ENCODE measurements at regions of chr1 and their contacts with region 1.

Region 1: DNA sequence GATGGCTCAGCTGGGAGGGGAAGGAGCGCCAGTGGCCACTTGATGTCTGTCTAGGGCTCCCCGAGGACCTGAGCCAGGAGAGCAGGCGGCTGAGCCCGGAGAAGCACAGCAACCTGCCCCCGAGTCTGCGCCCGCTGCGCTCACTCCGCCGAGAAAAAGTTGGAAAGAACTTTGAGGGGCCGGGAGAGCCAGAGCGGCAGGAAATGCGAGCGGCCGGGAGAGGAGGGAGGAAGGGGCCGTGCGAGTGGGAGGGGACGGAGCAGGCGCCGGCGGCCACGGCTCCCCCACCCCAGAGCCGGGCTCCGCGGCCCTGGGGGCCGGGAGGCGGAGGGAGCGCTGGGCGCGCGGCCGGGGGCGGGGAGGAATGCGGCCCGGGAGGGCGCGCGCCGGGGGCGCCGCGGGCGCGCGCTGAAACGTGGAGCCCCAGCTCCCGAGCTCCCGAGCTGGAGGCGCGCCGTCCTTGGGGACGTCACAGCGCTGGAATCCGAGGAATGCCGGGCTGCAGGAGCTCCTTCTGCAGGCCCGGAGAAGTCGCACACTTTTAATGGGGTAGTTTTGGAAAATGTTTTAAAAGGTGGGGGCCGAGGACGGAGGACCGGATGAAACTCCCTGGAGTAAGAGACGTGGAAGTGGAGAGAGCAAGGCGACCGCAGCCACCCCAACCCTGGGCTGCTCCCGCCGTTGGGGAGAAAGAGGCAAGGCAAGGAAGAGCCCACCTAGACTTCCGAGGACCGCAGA is at the start of gene PTPN14:
- DNase-seq: peak; percentile 96
- H3K4me3 Mint-ChIP-seq: peak within 1 kb of the TSS; percentile 78
- H3K27ac Mint-ChIP-seq: peak within 1 kb of the TSS; percentile 86
- H3K4me1 Mint-ChIP-seq: peaks cover 26% of the 10 kb centered on the region
- H3K27me3 Mint-ChIP-seq: no peaks in the 10 kb centered on the region
- CTCF ChIP-seq: peak; percentile 24
- total RNA-seq, gene PTPN14: 72.4 and 77.4 TPM in 2 replicates

Region 2: DNA sequence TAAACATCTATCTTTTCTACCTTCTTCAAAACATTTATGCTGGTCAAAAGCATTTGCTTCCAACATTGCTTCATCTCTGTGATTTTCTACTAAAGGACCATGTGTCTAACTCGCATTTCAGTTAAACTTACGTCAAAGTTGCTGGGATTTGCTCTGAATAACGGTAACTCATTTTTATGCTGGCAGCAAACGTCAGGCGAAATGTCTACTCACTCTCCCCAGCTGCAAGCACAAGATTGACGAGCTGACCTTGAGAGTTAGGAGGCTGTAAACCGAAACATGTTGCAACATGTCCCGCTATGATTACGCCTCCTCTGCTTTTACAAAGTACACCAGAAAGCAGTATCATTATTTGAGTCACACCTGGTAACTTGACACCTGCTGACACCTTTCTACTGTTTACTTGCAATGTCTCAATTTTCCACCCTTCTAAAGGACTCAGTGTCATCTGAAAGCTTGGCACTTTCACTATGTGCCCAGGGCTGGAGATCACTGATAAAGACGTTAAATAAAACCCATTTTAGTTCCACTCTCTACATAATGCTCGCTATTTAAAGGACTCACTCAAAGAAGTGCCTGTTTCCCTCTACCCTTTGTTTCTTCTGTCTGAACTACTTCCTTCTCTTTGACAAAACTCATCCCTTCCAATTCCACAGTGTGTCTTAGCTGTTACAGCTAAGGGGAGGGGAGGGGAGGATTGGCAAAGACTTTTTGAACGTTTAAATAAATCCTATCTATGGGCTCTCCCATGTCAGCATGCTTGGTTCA is 112.1 kb before region 1 on chr1:
- CTCF ChIA-PET with region 1: interaction called, 3 read pairs
- intact Hi-C with region 1: loop called (anchors 2 kb)
- DNase-seq: peak; percentile 64
- H3K4me3 Mint-ChIP-seq: peak overlapping the region; percentile 53
- H3K27ac Mint-ChIP-seq: peak overlapping the region; percentile 67
- H3K4me1 Mint-ChIP-seq: peaks cover 63% of the 10 kb centered on the region
- H3K27me3 Mint-ChIP-seq: no peaks in the 10 kb centered on the region
- CTCF ChIP-seq: no peak

Region 3: GRCh38 chr1:214446772-214447556 is 104.6 kb before region 1 on chr1:
- CTCF ChIA-PET with region 1: no interaction called
- intact Hi-C with region 1: loop called (anchors 2 kb)
- DNase-seq: peak; percentile 88
- H3K4me3 Mint-ChIP-seq: peak overlapping the region; percentile 47
- H3K27ac Mint-ChIP-seq: peak overlapping the region; percentile 85
- H3K4me1 Mint-ChIP-seq: peaks cover 76% of the 10 kb centered on the region
- H3K27me3 Mint-ChIP-seq: no peaks in the 10 kb centered on the region
- CTCF ChIP-seq: no peak

Region 4: GRCh38 chr1:214492401-214493075 is 59.1 kb before region 1 on chr1:
- CTCF ChIA-PET with region 1: no interaction called
- intact Hi-C with region 1: no loop called
- DNase-seq: no peak
- H3K4me3 Mint-ChIP-seq: no peak overlapping the region
- H3K27ac Mint-ChIP-seq: no peak overlapping the region
- H3K4me1 Mint-ChIP-seq: peaks cover 75% of the 10 kb centered on the region
- H3K27me3 Mint-ChIP-seq: no peaks in the 10 kb centered on the region
- CTCF ChIP-seq: no peak

Region 5: DNA sequence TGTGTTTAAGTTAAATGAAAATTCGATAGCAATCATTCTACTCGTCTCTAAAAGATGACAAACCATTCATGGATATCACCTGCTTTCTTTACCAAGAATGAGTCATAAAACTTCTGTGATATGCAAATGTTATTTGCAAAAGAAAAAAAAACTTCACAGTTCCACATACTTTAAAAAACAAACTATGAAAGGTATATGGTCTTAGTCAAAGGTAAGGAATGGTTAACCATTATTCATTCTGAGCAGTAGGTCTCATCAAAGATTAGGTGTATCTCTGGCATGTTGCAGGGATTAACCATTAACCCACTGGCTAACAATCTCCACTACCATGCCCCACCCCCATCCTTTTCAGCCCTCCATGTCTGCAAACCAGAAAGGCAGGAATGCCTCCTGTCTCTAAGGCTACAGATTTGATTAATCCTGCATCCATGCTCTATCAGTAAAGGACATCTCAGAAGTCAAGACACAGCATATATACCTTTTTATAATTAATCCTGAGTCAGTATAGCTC is 44.6 kb before region 1 on chr1:
- CTCF ChIA-PET with region 1: interaction called, 3 read pairs
- intact Hi-C with region 1: loop called (anchors 2 kb)
- DNase-seq: peak; percentile 93
- H3K4me3 Mint-ChIP-seq: peak overlapping the region; percentile 39
- H3K27ac Mint-ChIP-seq: peak overlapping the region; percentile 83
- H3K4me1 Mint-ChIP-seq: peaks cover 58% of the 10 kb centered on the region
- H3K27me3 Mint-ChIP-seq: no peaks in the 10 kb centered on the region
- CTCF ChIP-seq: no peak